ENCODE measurements at regions of chr15 and their contacts with region 1.

Region 1: GRCh38 chr15:39756806-39757522 is 25.7 kb downstream of the FSIP1 start:
- DNase-seq: peak; percentile 47
- ATAC-seq: peak; percentile 40; the same call in 1 of the 2 replicates
- H3K4me3 ChIP-seq: no peak overlapping the region
- H3K27ac ChIP-seq: no peak overlapping the region
- H3K4me1 ChIP-seq: no peaks in the 10 kb centered on the region
- H3K27me3 ChIP-seq: no peaks in the 10 kb centered on the region
- CTCF ChIP-seq: peak; percentile 54 to 71 (median 68); a peak in 5 of 6 replicates
- POLR2A ChIP-seq: no peak
- RAD21 ChIP-seq: peak; percentile 62

Region 2: GRCh38 chr15:38707802-38708671 is 1048.9 kb before region 1 on chr15:
- CTCF ChIA-PET with region 1: interaction called, 26 read pairs
- POLR2A ChIA-PET with region 1: no interaction called
- RAD21 ChIA-PET with region 1: no interaction called
- intact Hi-C with region 1: loop called (anchors 1 kb)
- DNase-seq: peak; percentile 53
- ATAC-seq: peak; percentile 95
- H3K4me3 ChIP-seq: no peak overlapping the region
- H3K27ac ChIP-seq: no peak overlapping the region
- H3K4me1 ChIP-seq: no peaks in the 10 kb centered on the region
- H3K27me3 ChIP-seq: peaks cover 20% of the 10 kb centered on the region
- CTCF ChIP-seq: peak; percentile 40 to 70 (median 67); a peak in 5 of 6 replicates
- POLR2A ChIP-seq: no peak
- RAD21 ChIP-seq: peak; percentile 69

Region 3: DNA sequence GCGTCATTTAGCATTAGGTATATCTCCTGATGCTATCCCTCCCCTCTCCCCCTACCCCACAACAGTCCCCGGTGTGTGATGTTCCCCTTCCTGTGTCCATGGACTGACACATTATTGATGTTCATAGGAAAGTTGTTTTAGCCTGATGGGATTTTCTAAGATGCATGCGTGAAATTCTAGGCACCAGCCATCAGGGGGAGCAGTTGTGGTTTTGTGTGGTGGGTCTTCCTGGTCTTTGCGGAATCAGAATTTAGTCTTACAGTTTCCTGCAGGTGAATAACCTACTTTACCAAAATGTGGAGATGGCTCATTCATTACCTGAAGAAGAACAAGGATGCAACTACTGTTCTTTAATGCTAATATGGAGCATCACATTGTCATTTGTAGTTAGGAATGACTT is 631.1 kb before region 1 on chr15:
- CTCF ChIA-PET with region 1: interaction called, 6 read pairs
- POLR2A ChIA-PET with region 1: no interaction called
- RAD21 ChIA-PET with region 1: no interaction called
- intact Hi-C with region 1: loop called (anchors 5 kb)
- DNase-seq: peak; percentile 51
- ATAC-seq: 0 out of 2 replicates have a peak, but pooled peaks have one; percentile 30
- H3K4me3 ChIP-seq: no peak overlapping the region
- H3K27ac ChIP-seq: no peak overlapping the region
- H3K4me1 ChIP-seq: peaks cover 26 to 52% of the 10 kb centered on the region in 2 experiments
- H3K27me3 ChIP-seq: no peaks in the 10 kb centered on the region
- CTCF ChIP-seq: peak; percentile 29 to 76 (median 74); a peak in 5 of 6 replicates
- POLR2A ChIP-seq: no peak
- RAD21 ChIP-seq: peak; percentile 47

Region 4: GRCh38 chr15:39580117-39580484 is 176.9 kb before region 1 on chr15:
- CTCF ChIA-PET with region 1: interaction called, 52 read pairs
- POLR2A ChIA-PET with region 1: interaction called, 7 read pairs
- RAD21 ChIA-PET with region 1: interaction called, 4 read pairs
- intact Hi-C with region 1: loop called (anchors 2 kb)
- DNase-seq: peak; percentile 63
- ATAC-seq: peak; percentile 75
- H3K4me3 ChIP-seq: peak overlapping the region; percentile 64 to 68
- H3K27ac ChIP-seq: no peak overlapping the region; the same call in 1 of the 2 replicates
- H3K4me1 ChIP-seq: peaks cover 11 to 29% of the 10 kb centered on the region in 2 experiments
- H3K27me3 ChIP-seq: no peaks in the 10 kb centered on the region
- CTCF ChIP-seq: peak; percentile 90 to 97 (median 94)
- POLR2A ChIP-seq: no peak
- RAD21 ChIP-seq: peak; percentile 77

Region 5: DNA sequence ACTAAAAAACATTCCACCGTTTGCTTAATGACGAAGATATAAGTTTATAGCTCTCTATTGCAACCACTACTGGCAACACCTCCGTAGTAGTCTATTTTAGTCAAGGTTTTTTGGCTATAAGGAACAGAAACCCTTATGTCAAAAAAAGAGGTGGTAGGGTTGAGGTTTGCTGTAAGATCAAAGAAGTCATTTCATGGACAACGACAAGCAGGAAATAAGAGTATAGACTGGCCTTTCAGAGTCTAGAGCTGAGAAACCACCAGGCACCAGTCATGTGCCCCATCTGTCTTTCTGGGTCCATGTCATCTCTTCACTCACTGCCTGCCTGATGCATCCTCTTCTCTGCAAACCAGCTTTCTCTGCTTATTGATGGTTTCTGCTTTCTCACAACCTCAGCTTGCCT is 133.4 kb before region 1 on chr15:
- CTCF ChIA-PET with region 1: interaction called, 14 read pairs
- POLR2A ChIA-PET with region 1: no interaction called
- RAD21 ChIA-PET with region 1: no interaction called
- intact Hi-C with region 1: no loop called
- DNase-seq: no peak
- ATAC-seq: no peak
- H3K4me3 ChIP-seq: no peak overlapping the region
- H3K27ac ChIP-seq: no peak overlapping the region
- H3K4me1 ChIP-seq: peaks cover 3 to 23% of the 10 kb centered on the region in 2 experiments; a peak in 2 of 4 replicates
- H3K27me3 ChIP-seq: no peaks in the 10 kb centered on the region
- CTCF ChIP-seq: no peak
- POLR2A ChIP-seq: no peak
- RAD21 ChIP-seq: no peak

Region 6: GRCh38 chr15:39686000-39686613 is 70.9 kb before region 1 on chr15:
- CTCF ChIA-PET with region 1: interaction called, 91 read pairs
- POLR2A ChIA-PET with region 1: no interaction called
- RAD21 ChIA-PET with region 1: interaction called, 6 to 14 read pairs
- intact Hi-C with region 1: loop called (anchors 1 kb)
- DNase-seq: peak; percentile 37
- ATAC-seq: peak; percentile 72
- H3K4me3 ChIP-seq: no peak overlapping the region
- H3K27ac ChIP-seq: no peak overlapping the region
- H3K4me1 ChIP-seq: no peaks in the 10 kb centered on the region
- H3K27me3 ChIP-seq: no peaks in the 10 kb centered on the region
- CTCF ChIP-seq: peak; percentile 55 to 83 (median 76); a peak in 5 of 6 replicates
- POLR2A ChIP-seq: no peak
- RAD21 ChIP-seq: peak; percentile 74

Region 7: GRCh38 chr15:39770748-39771689 is 14.1 kb after region 1 on chr15:
- CTCF ChIA-PET with region 1: interaction called, 22 read pairs
- POLR2A ChIA-PET with region 1: no interaction called
- RAD21 ChIA-PET with region 1: no interaction called
- intact Hi-C with region 1: no loop called
- DNase-seq: no peak
- ATAC-seq: no peak
- H3K4me3 ChIP-seq: no peak overlapping the region
- H3K27ac ChIP-seq: no peak overlapping the region
- H3K4me1 ChIP-seq: no peaks in the 10 kb centered on the region
- H3K27me3 ChIP-seq: no peaks in the 10 kb centered on the region
- CTCF ChIP-seq: no peak
- POLR2A ChIP-seq: no peak
- RAD21 ChIP-seq: no peak